ENCODE measurements at regions of chr13 and their contacts with region 1.

Region 1: GRCh38 chr13:36346222-36347083 is at the start of gene SPART:
- DNase-seq: peak; percentile 74
- ATAC-seq: peak; percentile 90
- H3K4me3 Mint-ChIP-seq: peak within 1 kb of the TSS; percentile 92
- H3K27ac Mint-ChIP-seq: peak within 1 kb of the TSS; percentile 90
- H3K4me1 Mint-ChIP-seq: peaks cover 26% of the 10 kb centered on the region
- H3K27me3 Mint-ChIP-seq: peaks cover 10% of the 10 kb centered on the region
- CTCF ChIP-seq: peak; percentile 90
- total RNA-seq, gene SPART: 17.2 and 19.8 TPM in 2 replicates

Region 2: DNA sequence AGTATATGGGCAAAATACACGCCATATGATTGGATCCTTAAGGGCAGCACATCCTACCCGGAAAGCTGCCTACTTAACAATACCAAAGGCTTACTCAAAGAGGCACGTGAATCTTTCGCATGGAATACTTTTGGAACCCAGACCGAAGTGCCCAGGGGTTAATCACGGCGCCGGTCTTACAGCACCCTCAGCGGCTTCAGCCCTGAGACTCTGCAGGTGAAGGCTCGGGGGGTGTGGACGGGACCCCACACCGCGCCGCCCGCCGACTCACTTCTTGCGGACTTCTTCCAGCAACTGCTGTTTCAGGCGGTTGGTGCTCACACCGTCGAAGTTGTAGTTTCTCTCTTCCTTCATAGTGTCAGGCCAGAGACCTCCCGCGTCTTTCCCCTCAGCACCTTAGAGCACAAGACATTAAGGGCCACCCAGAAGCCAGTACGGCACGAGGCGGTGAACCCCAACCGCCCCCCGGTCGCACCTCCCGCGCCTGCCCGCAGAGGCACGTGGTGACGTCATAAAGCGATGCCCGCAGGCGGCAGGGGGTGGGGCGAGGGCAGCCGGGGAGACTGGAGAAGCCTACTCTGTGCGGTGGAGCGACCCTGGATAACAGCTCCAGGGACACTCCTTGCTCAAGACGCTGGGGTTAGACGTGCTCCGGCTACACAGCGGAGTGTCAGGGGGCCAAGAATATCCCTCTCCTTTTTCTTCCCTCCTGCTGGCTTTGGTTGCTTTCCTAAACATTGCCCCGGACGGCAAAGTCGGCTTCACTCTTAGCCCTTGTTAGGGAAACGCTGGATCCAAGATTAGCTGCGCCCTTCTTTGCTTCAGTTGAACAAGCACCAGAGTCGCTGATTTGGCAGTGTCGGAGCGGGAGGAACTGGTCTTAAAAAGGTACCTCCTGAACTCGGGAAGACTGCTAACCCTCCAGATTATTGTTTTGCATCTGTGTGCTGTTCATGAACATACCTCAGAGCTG is 48.8 kb before region 1 on chr13 and contains the start of gene CCDC169:
- CTCF ChIA-PET with region 1: no interaction called
- POLR2A ChIA-PET with region 1: no interaction called
- intact Hi-C with region 1: loop called (anchors 1 kb)
- DNase-seq: peak; percentile 48
- ATAC-seq: peak; percentile 88
- H3K4me3 Mint-ChIP-seq: peak within 1 kb of the TSS; percentile 85
- H3K27ac Mint-ChIP-seq: no peak within 1 kb of the TSS
- H3K4me1 Mint-ChIP-seq: peaks cover 18% of the 10 kb centered on the region
- H3K27me3 Mint-ChIP-seq: peaks cover 18% of the 10 kb centered on the region
- CTCF ChIP-seq: no peak
- total RNA-seq, gene CCDC169: 0.18 TPM in 1 of 2 replicates, not detected in the other

Region 3: DNA sequence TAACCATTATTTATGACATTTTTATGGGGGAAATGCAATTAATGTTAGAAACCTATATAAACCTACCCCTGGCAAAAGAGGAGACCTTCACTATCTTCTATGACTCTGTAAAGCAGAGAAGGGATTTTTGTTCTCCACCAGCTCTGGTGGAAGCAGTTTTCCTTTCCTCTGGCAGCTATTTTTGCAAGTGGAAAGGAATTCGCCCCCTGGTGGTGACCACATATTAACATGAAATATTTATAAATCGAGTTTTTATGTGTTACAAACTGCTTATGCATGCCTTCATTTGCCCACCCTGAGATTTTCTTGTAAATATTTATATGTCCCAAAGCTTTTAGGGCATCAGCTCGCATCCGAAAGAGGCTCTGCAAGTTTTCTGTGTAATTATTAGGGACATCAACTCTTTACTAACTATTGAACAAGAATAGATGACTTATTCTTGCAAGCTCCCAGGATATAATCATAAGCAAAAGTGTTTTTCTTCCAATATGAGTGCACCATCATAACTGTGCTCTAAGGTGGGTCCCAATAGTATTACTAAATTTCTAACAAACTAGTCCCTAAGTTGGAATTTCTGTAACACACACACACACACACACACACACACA is 389.8 kb after region 1 on chr13:
- CTCF ChIA-PET with region 1: interaction called, 22 read pairs
- POLR2A ChIA-PET with region 1: no interaction called
- intact Hi-C with region 1: loop called (anchors 1 kb)
- DNase-seq: no peak
- ATAC-seq: no peak
- H3K4me3 Mint-ChIP-seq: no peak overlapping the region
- H3K27ac Mint-ChIP-seq: no peak overlapping the region
- H3K4me1 Mint-ChIP-seq: no peaks in the 10 kb centered on the region
- H3K27me3 Mint-ChIP-seq: no peaks in the 10 kb centered on the region
- CTCF ChIP-seq: peak; percentile 71

Region 4: DNA sequence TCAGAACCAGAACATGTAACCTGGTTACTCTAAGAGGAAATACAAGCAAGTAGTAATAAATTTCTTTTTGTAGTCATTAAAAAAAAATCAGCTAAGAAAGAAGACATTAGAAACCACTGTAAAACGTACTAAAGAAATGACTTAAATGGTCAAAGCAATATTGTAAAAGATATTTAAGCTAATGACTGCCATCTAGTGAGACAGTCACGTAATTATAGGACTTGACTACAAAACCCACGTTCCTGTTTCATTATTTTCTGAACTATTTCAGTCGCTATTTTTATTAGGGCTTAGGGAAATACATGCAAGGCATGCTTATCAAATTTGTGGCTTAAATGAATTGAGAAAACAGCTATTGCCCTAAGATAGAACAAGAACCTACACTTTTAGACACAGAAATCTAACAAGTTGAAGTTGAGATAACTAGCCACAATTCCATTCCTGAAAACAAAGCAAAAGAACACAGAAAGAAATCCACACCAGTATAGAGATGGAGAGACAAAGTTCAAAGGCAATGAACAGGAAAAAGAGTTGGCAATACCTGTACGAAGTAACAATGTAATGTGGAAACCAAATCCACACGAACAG is 634.8 kb after region 1 on chr13:
- CTCF ChIA-PET with region 1: no interaction called
- POLR2A ChIA-PET with region 1: no interaction called
- intact Hi-C with region 1: loop called (anchors 5 kb)
- DNase-seq: no peak
- ATAC-seq: peak; percentile 34
- H3K4me3 Mint-ChIP-seq: no peak overlapping the region
- H3K27ac Mint-ChIP-seq: no peak overlapping the region
- H3K4me1 Mint-ChIP-seq: no peaks in the 10 kb centered on the region
- H3K27me3 Mint-ChIP-seq: no peaks in the 10 kb centered on the region
- CTCF ChIP-seq: no peak

Region 5: GRCh38 chr13:37058910-37059847 is 712.7 kb after region 1 on chr13 and contains the start of gene SUPT20H:
- CTCF ChIA-PET with region 1: no interaction called
- POLR2A ChIA-PET with region 1: no interaction called
- intact Hi-C with region 1: loop called (anchors 1 kb)
- DNase-seq: peak; percentile 92
- ATAC-seq: peak; percentile 94
- H3K4me3 Mint-ChIP-seq: peak within 1 kb of the TSS; percentile 96
- H3K27ac Mint-ChIP-seq: peak within 1 kb of the TSS; percentile 97
- H3K4me1 Mint-ChIP-seq: peaks cover 29% of the 10 kb centered on the region
- H3K27me3 Mint-ChIP-seq: no peaks in the 10 kb centered on the region
- CTCF ChIP-seq: no peak
- total RNA-seq, gene SUPT20H: 61.9 and 66.6 TPM in 2 replicates

Measured in activated B cell treated with CpG ODN at 0.5 μM for 24 hours (primary cell).